ENCODE measurements at regions of chr11 and their contacts with region 1.

Region 1: DNA sequence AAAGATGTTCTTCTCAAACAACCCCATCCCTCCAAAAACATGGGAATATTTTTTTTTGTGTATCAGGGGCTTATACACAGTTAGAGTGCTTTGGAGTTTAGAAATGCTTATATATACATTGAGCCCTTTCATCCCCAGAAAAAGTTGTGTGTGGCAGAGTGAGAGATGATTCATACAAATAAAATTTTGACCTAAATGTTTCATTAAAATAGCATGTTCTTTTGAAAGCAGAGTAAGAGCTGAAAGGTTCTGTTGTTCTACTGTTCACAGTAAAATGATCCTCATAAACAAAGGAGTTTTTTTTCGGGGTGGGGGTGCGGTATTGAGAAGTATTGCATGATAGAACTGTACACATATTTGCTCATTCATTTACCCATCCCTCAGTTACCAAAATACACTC is 512.4 kb downstream of the DLG2 start:
- DNase-seq: peak; percentile 84
- ATAC-seq: peak; percentile 85
- H3K4me3 ChIP-seq: no peak overlapping the region
- H3K27ac ChIP-seq: no peak overlapping the region
- H3K4me1 ChIP-seq: peaks cover 22% of the 10 kb centered on the region
- H3K27me3 ChIP-seq: no peaks in the 10 kb centered on the region
- CTCF ChIP-seq: no peak

Region 2: GRCh38 chr11:85132851-85133585 is 18.2 kb after region 1 on chr11:
- CTCF ChIA-PET with region 1: no interaction called
- POLR2A ChIA-PET with region 1: no interaction called
- intact Hi-C with region 1: no loop called
- DNase-seq: no peak
- ATAC-seq: no peak
- H3K4me3 ChIP-seq: no peak overlapping the region
- H3K27ac ChIP-seq: no peak overlapping the region
- H3K4me1 ChIP-seq: no peaks in the 10 kb centered on the region
- H3K27me3 ChIP-seq: no peaks in the 10 kb centered on the region
- CTCF ChIP-seq: no peak

Region 3: DNA sequence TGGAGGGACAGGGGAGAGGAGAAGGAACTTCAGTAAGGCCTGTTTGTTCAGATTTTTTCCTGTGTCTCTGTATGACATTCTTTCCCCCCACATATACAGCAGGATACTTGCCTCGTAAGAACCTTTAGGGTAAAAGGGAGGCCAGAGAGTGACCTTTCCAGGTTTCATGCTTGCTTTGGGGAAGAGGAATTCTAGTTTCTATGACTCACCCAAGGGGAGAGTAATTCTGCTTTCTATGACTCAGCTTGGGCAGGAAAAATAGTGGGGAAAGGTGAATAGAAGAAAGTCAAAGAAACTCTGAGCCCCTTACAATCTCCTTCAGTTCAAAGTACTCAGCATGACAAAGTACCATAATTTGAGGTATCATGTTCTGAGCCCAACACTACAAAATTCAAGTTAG is 55.4 kb after region 1 on chr11:
- CTCF ChIA-PET with region 1: interaction called, 13 read pairs
- POLR2A ChIA-PET with region 1: no interaction called
- intact Hi-C with region 1: no loop called
- DNase-seq: peak; percentile 98
- ATAC-seq: peak; percentile 91
- H3K4me3 ChIP-seq: peak overlapping the region; percentile 31; the same call in 1 of the 2 replicates
- H3K27ac ChIP-seq: peak overlapping the region; percentile 81
- H3K4me1 ChIP-seq: peaks cover 46% of the 10 kb centered on the region
- H3K27me3 ChIP-seq: no peaks in the 10 kb centered on the region
- CTCF ChIP-seq: no peak

Region 4: GRCh38 chr11:85269107-85269506 is 154.3 kb after region 1 on chr11:
- CTCF ChIA-PET with region 1: no interaction called
- POLR2A ChIA-PET with region 1: no interaction called
- intact Hi-C with region 1: no loop called
- DNase-seq: no peak
- ATAC-seq: no peak
- H3K4me3 ChIP-seq: no peak overlapping the region
- H3K27ac ChIP-seq: no peak overlapping the region
- H3K4me1 ChIP-seq: no peaks in the 10 kb centered on the region
- H3K27me3 ChIP-seq: no peaks in the 10 kb centered on the region
- CTCF ChIP-seq: no peak

Measured in PC-3 (cell line).